Astrocyte of the cerebellum (primary cell): ENCODE measurements at regions of chr4 and their contacts with region 1.

Region 1: DNA sequence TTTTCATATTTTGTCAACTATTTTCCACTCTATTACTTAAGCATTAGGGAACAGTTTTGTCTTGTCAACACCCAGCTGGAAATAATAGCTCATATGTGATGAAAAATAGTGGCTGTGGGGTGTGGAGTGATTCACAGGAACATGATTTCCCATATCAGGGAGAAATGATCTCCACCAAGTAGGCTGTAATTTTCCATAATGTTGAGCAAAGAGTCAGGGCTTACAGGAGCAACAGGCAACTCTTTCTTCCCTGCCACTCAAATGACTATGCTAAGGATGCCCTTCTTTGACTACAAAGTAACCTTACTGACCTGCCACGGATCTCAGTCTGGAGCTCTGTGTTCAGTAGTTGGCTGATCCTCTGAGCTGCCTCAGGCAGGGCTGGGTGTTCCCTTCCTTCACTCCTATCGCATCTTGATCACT is 90.0 kb upstream of the GATB start:
- DNase-seq: no peak
- H3K4me3 ChIP-seq: no peak overlapping the region
- CTCF ChIP-seq: no peak

Region 2: DNA sequence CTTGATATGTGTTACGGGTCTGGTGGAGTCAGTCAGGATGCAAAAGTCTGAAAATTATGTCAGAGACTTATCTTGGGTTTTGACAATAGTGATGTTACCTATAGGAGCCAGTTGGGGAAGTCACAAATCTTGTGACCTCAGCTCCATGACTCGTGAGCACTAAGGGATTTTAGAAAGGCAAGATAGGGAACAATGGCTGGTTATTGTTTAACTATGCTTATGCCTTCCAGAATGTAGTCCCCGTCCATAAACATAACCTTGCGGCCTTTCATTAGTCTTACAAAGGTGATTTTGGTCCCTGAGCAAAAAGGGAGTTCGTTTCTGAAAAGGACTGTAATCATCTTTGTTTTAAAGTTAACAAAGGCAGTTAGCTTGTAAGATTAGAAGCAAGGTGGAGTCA is 66.1 kb before region 1 on chr4:
- in situ Hi-C with region 1: loop called (anchors 5 kb)
- DNase-seq: no peak
- H3K4me3 ChIP-seq: no peak overlapping the region
- CTCF ChIP-seq: no peak

Region 3: GRCh38 chr4:151933122-151933827 is 82.5 kb after region 1 on chr4:
- in situ Hi-C with region 1: no loop called
- DNase-seq: no peak
- H3K4me3 ChIP-seq: no peak overlapping the region
- CTCF ChIP-seq: no peak

Region 4: DNA sequence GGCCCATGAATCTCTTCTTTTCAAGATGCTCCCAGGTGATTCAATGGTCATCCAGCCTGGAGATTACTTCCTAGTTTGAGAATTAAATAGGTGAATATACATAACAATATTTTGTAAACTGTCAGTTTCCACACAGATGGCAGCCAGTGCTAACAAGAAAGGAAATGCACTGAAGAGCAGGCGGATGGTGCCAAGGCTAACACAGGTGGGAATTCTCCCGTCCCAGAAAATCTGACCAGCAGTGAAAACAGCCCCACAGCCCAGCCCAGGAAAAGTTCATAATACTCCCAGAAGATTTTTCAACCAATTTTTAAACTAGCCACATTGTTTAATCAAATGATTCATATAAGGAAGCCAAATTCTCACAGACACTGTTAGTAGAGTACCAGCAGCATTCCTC is 297.3 kb after region 1 on chr4:
- in situ Hi-C with region 1: no loop called
- DNase-seq: no peak
- H3K4me3 ChIP-seq: no peak overlapping the region
- CTCF ChIP-seq: no peak